ENCODE measurements at regions of chr4 and their contacts with region 1.

Region 1: GRCh38 chr4:173413036-173413435 is 14.1 kb upstream of the SCRG1 start:
- DNase-seq: no peak
- ATAC-seq: no peak
- H3K4me3 Mint-ChIP-seq: no peak overlapping the region
- H3K27ac Mint-ChIP-seq: no peak overlapping the region
- H3K4me1 Mint-ChIP-seq: no peaks in the 10 kb centered on the region
- H3K27me3 Mint-ChIP-seq: no peaks in the 10 kb centered on the region

Region 2: GRCh38 chr4:173318648-173319211 is 94.3 kb before region 1 on chr4:
- CTCF ChIA-PET with region 1: interaction called, 32 read pairs
- POLR2A ChIA-PET with region 1: no interaction called
- intact Hi-C with region 1: loop called (anchors 1 kb)
- DNase-seq: no peak
- ATAC-seq: peak; percentile 88
- H3K4me3 Mint-ChIP-seq: no peak overlapping the region
- H3K27ac Mint-ChIP-seq: no peak overlapping the region
- H3K4me1 Mint-ChIP-seq: peaks cover 11% of the 10 kb centered on the region
- H3K27me3 Mint-ChIP-seq: no peaks in the 10 kb centered on the region

Region 3: GRCh38 chr4:173859091-173859713 is 446.2 kb after region 1 on chr4:
- CTCF ChIA-PET with region 1: no interaction called
- POLR2A ChIA-PET with region 1: no interaction called
- intact Hi-C with region 1: no loop called
- DNase-seq: no peak
- ATAC-seq: no peak
- H3K4me3 Mint-ChIP-seq: no peak overlapping the region
- H3K27ac Mint-ChIP-seq: no peak overlapping the region
- H3K4me1 Mint-ChIP-seq: no peaks in the 10 kb centered on the region
- H3K27me3 Mint-ChIP-seq: no peaks in the 10 kb centered on the region

Measured in activated CD4-positive, alpha-beta T cell treated with anti-CD3 and anti-CD28 coated beads for 36 hours (primary cell).